Posterior cingulate gyrus (tissue), 11 donors: ENCODE measurements at regions of chr10 and their contacts with region 1.

Region 1: DNA sequence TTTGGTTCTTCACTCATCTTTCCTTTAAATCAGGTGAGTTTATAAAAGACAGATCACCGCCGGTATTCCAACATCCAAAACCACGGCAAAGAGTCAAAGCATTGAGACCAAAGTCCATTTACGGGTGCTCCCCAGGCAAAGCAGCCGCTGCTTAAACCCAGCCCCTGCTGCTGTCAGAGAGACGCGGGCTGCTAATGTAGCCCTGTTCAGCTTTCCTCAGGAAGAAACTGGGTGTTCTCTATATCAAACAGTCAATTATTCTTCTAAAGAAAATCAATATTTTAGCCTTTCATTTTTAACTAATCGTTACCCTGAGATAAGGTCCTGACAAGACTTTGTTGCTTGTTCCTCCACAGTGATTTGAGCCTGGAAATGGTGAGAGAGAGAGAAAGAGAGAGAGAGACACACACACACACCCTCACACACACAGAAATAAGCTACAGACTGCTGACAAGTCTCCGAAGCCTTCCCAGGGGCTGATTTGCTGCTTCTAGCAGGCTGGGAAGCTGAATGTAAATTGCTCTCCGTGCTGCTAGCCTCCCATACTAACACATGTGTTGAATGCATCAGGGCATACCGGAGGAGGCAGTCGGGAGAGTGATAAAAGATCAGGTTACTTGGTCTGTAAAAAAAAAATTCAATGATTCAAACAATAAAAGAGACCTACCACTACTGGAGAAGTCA is 183.0 kb upstream of the ANK3 start:
- DNase-seq: peak; percentile 32 to 91 (median 54)

Region 2: DNA sequence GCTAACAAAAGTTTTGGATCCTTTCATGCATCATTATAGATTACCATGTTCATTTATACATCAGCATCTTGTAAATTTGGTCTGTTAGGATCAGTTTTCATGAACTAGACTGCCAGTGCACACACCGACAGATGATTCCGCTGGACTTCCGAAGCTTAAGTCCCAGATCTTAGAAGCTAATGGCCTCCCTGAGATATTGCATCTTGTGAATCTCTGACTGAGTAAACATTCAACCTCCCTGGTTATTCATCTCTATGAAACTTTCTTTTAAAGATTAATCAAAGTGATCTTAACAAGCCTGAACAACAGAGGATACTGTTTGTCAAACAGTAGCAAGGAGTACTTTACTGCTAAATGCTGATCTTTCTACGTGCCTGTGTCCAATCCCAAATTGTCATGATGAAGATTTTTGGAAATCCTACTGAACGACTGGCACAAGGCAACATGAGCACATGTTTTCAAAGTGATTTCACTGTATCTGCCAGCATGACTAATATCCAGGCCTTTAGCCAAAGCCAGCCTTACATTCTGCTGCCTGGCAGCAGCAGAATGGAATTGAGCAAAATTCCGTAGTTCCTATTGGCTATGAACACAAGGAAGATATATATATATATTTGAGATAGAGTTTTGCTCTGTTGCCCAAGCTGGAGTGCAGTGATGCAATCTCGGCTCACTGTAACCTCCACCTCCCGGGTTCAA is 91.6 kb before region 1 on chr10:
- intact Hi-C with region 1: loop called (anchors 10 kb)
- DNase-seq: peak in 7 of 10 donors; percentile 23 to 88 (median 39)